ENCODE measurements at regions of chr1 and their contacts with region 1.

Region 1: GRCh38 chr1:208785629-208786028 is 541.4 kb upstream of the PLXNA2 start:
- DNase-seq: no peak
- H3K4me3 ChIP-seq: no peak overlapping the region
- H3K27ac ChIP-seq: no peak overlapping the region
- H3K4me1 ChIP-seq: no peaks in the 10 kb centered on the region
- H3K27me3 ChIP-seq: peaks cover 49% of the 10 kb centered on the region
- CTCF ChIP-seq: no peak

Region 2: GRCh38 chr1:208766832-208767231 is 18.8 kb before region 1 on chr1:
- CTCF ChIA-PET with region 1: no interaction called
- POLR2A ChIA-PET with region 1: no interaction called
- intact Hi-C with region 1: loop called (anchors 1 kb)
- DNase-seq: no peak
- H3K4me3 ChIP-seq: no peak overlapping the region
- H3K27ac ChIP-seq: no peak overlapping the region
- H3K4me1 ChIP-seq: no peaks in the 10 kb centered on the region
- H3K27me3 ChIP-seq: peaks cover 3% of the 10 kb centered on the region; the same call in 1 of the 2 replicates
- CTCF ChIP-seq: no peak

Region 3: GRCh38 chr1:208834381-208835096 is 48.9 kb after region 1 on chr1:
- CTCF ChIA-PET with region 1: no interaction called
- POLR2A ChIA-PET with region 1: no interaction called
- intact Hi-C with region 1: no loop called
- DNase-seq: no peak
- H3K4me3 ChIP-seq: no peak overlapping the region
- H3K27ac ChIP-seq: no peak overlapping the region
- H3K4me1 ChIP-seq: no peaks in the 10 kb centered on the region
- H3K27me3 ChIP-seq: peaks cover 53% of the 10 kb centered on the region
- CTCF ChIP-seq: no peak

Region 4: GRCh38 chr1:208917723-208918122 is 132.1 kb after region 1 on chr1:
- CTCF ChIA-PET with region 1: no interaction called
- POLR2A ChIA-PET with region 1: no interaction called
- intact Hi-C with region 1: no loop called
- DNase-seq: no peak
- H3K4me3 ChIP-seq: no peak overlapping the region
- H3K27ac ChIP-seq: no peak overlapping the region
- H3K4me1 ChIP-seq: peaks cover 8% of the 10 kb centered on the region; the same call in 1 of the 2 replicates
- H3K27me3 ChIP-seq: no peaks in the 10 kb centered on the region
- CTCF ChIP-seq: no peak